Endothelial cell of umbilical vein (primary cell): ENCODE measurements at regions of chr2 and their contacts with region 1.

Region 1: GRCh38 chr2:36147670-36148390 is 207.7 kb upstream of the CRIM1 start:
- DNase-seq: no peak
- H3K4me3 ChIP-seq: no peak overlapping the region
- H3K27ac ChIP-seq: no peak overlapping the region
- H3K4me1 ChIP-seq: no peaks in the 10 kb centered on the region
- H3K27me3 ChIP-seq: no peaks in the 10 kb centered on the region
- CTCF ChIP-seq: no peak
- POLR2A ChIP-seq: no peak

Region 2: GRCh38 chr2:36178384-36178783 is 30.6 kb after region 1 on chr2:
- CTCF ChIA-PET with region 1: no interaction called
- POLR2A ChIA-PET with region 1: no interaction called
- dilution Hi-C with region 1: no loop called
- intact Hi-C with region 1: loop called (anchors 2 kb)
- DNase-seq: peak; percentile 73
- H3K4me3 ChIP-seq: no peak overlapping the region
- H3K27ac ChIP-seq: no peak overlapping the region
- H3K4me1 ChIP-seq: peaks cover 4% of the 10 kb centered on the region
- H3K27me3 ChIP-seq: no peaks in the 10 kb centered on the region
- CTCF ChIP-seq: no peak
- POLR2A ChIP-seq: no peak